GM12878 (cell line): ENCODE measurements at regions of chr20 and their contacts with region 1.

Region 1: DNA sequence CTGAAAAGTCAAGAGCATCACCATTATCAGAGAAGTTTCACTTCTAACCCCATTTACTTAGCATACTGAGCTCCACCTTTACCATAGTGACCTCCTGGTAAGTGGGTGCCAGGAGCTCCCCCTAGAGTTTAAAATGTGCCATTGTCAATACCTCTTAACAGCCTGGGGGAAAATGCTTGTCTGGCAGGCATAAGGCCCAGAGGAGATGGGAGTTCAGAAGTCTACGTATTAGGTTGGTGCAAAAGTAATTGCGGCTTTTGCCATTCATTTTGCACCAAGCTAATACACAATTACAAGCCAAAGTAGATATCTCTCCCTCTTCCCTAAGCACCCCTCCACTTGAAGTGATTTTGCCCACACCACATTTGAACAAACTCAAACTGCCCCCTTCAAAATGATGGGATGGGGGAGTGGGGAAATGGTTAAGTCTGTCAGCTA is 919.0 kb downstream of the KIF16B start:
- DNase-seq: peak; percentile 43
- ATAC-seq: peak; percentile 98
- H3K4me3 ChIP-seq: no peak overlapping the region
- H3K27ac ChIP-seq: no peak overlapping the region
- H3K4me1 ChIP-seq: peaks cover 4% of the 10 kb centered on the region
- H3K27me3 ChIP-seq: no peaks in the 10 kb centered on the region
- CTCF ChIP-seq: peak; percentile 69 to 82 (median 71); a peak in 5 of 6 replicates
- EP300 ChIP-seq: no peak
- POLR2A ChIP-seq: no peak
- RAD21 ChIP-seq: peak; percentile 84

Region 2: DNA sequence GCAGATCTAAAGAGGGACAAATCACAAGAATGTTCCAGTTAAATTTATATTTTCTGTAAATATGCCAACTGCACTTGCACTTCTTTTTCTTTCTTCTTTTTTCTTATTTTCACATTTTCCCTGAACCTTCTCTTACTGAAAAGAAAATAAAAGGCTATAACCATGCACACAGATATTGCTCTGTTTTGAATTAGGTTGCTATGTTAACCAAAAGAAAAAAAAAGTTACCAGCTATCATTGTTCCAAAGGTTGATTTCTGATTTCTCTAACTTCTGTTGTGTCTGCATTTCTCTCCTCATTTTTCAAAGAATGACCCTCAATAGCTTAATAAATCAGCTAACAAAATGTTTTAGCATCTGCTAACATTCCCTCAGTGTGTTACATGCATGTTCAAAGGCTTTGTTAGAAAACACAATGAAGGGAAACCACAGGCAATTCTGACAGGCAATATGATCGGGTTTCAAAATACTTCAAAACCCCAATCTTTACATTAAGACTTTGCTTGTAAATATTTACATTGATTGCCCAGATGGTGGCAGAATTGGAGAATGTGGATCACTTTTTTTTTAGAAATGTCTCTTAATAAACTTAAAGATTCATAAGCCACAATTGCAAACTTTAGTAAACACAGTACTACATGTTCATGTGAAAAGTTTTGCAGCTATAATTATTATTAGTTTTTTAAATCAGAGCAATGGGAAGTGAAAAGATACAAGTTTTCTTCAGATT is 388.5 kb before region 1 on chr20:
- CTCF ChIA-PET with region 1: no interaction called
- POLR2A ChIA-PET with region 1: no interaction called
- RAD21 ChIA-PET with region 1: no interaction called
- SMC1A ChIA-PET with region 1: no interaction called
- in situ Hi-C with region 1: no loop called
- intact Hi-C with region 1: loop called (anchors 5 kb)
- DNase-seq: no peak
- ATAC-seq: no peak
- H3K4me3 ChIP-seq: no peak overlapping the region
- H3K27ac ChIP-seq: no peak overlapping the region
- H3K4me1 ChIP-seq: peaks cover 23% of the 10 kb centered on the region
- H3K27me3 ChIP-seq: no peaks in the 10 kb centered on the region
- CTCF ChIP-seq: peak in 2 of 3 experiments; percentile 7 to 19; a peak in 2 of 6 replicates
- EP300 ChIP-seq: no peak
- POLR2A ChIP-seq: no peak
- RAD21 ChIP-seq: peak; percentile 25